ENCODE measurements at regions of chr14 and their contacts with region 1.

Region 1: GRCh38 chr14:87745507-87746118 is 247.4 kb downstream of the GALC start:
- DNase-seq: no peak
- H3K4me3 ChIP-seq: no peak overlapping the region
- H3K27ac ChIP-seq: no peak overlapping the region
- H3K4me1 ChIP-seq: no peaks in the 10 kb centered on the region
- H3K27me3 ChIP-seq: no peaks in the 10 kb centered on the region
- CTCF ChIP-seq: peak; percentile 43

Region 2: DNA sequence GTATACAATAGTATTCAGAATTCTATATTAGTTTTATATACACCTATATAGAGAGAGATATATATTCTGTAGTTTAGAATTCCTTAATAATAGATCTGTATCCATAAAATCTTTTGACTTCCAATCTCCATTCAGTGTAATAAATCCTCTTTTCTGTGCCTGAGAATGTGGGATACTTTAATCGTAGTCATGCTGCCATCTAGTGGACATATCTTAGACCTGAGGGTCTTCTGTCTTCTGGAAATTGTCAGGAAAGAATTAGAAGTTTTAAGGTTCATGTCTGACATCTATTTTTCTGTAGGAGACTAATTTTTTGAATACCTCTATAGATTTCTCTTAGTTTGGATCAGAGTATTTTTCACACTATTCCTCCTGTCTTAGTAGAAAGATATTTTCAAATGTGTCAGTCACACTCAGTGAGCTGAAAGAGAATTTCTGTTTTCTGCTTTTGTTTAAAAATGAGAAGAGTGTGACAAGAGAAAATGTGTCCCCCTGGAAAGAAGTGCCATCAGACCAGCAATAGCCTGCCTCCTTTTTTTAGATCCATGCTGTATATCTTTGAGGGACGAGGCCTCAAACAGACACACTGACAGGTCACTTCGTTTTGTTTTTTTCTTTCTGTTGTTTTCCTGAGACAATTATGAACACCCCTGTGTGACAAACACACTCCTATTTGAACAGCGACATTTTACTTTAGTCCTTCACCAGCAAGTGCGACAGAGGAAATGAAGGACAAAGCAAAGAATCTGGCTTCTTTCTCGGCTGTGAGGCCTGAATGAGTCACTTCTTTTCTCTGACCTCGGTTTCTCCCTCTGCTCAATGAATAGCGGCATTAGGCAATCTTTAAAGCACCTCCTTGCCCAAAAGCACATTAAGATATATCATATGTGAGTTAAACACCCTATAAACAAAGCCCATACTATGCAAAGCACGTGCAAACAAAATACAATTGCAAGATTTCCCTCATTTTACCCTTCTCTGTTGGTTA is 151.1 kb after region 1 on chr14:
- intact Hi-C with region 1: loop called (anchors 10 kb)
- DNase-seq: no peak
- H3K4me3 ChIP-seq: no peak overlapping the region
- H3K27ac ChIP-seq: no peak overlapping the region
- H3K4me1 ChIP-seq: no peaks in the 10 kb centered on the region
- H3K27me3 ChIP-seq: no peaks in the 10 kb centered on the region
- CTCF ChIP-seq: peak; percentile 66